ENCODE measurements at regions of chr1 and their contacts with region 1.

Region 1: DNA sequence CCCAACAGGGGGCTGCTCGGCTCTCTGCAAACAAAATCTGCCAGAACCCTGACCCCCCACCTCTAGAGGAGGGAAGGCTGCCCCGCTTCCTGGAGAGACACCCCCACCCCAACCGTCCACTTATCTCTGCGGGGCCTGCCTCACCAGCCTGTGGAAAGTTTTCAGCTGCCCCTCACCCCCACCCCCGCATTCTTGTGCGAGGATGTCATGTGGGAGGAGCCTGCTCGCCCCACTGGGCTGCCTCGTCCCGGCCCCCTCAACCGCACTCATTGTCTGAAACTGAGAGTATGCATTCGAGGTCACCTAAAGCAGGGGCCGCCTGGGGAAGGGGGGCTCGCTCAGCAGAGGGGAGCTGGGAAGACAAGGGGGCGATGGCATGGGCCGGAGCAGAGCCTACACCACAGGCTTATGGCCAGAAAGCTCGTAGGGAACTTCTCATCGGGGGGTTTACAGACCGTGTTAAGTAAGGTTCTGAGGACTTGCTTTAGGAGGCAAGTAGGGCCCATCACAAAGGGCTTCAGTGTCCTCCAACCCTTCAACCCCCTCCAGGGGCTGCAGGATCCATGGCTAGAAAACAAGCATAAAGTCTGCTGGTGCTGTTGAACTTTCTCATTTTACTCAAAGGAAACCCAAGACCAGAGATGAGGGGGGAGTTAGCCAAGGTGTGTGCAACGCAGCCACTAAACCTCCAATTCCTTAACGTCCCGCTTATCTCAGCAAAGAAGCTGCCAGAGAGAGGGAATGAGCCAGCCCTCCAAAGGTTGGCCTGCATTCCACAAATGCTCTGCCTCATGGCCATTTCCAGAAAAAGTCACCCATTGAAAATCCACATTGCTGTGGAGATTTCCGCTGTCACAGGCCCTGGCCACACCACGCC is 9.4 kb downstream of the EPHA2 start:
- DNase-seq: peak; percentile 92

Region 2: GRCh38 chr1:16017461-16018303 is 128.8 kb before region 1 on chr1 and contains the start of gene HSPB7:
- intact Hi-C with region 1: loop called (anchors 5 kb)
- DNase-seq: peak; percentile 95
- total RNA-seq, gene HSPB7: 3,889 TPM

Region 3: GRCh38 chr1:16181887-16182719 is 35.6 kb after region 1 on chr1:
- intact Hi-C with region 1: loop called (anchors 2 kb)
- DNase-seq: peak; percentile 92

Region 4: DNA sequence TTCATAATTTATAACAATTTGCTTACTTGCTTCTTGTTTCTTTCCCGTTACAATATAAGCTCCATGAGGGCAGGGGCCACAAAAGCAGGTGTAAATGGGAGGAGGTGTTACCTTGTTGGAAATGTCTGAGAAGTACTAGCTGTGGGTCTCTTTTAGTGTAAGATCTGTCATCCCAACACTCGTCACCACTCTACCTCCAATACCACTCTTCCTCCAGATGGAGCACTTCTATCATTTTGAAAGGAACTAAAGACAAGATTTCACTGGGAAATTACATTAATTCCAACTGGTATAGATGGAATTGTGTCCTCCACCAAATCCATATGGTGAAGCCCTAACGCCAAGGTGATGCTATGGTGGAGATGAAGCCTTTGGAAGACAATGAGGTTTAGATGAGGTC is 143.4 kb after region 1 on chr1:
- intact Hi-C with region 1: no loop called
- DNase-seq: no peak

Measured in cardiac septum (tissue), 1 donor.